CD8-positive, alpha-beta T cell (primary cell): ENCODE measurements at regions of chr11 and their contacts with region 1.

Region 1: DNA sequence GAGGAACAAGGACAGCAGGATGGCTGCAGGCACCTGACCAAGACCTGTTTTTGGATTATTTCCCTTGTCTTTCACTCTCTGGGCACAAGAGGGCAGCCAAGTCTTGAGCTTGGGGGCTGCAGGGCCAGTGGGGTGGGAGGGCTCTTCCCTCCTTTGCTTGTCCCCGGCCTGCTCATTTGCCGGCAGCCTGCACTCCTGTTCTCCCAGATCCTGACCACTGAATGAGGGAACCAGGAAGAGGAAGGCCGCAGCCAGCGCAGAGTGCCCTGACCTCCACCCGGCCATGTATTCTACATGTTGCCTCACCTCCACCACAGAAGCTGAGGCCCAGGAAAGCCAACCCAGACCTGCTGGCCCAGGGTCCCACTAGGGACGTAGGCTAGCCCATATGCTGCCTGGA is 15.5 kb upstream of the NNMT start:
- DNase-seq: no peak
- ATAC-seq: no peak
- H3K4me3 ChIP-seq: no peak overlapping the region
- H3K4me3 Mint-ChIP-seq: no peak overlapping the region
- H3K27ac ChIP-seq: no peak overlapping the region
- H3K27ac Mint-ChIP-seq: no peak overlapping the region
- H3K4me1 ChIP-seq: no peaks in the 10 kb centered on the region
- H3K4me1 Mint-ChIP-seq: no peaks in the 10 kb centered on the region
- H3K27me3 ChIP-seq: no peaks in the 10 kb centered on the region
- H3K27me3 Mint-ChIP-seq: peaks cover 23% of the 10 kb centered on the region
- CTCF ChIP-seq: peak; percentile 22

Region 2: DNA sequence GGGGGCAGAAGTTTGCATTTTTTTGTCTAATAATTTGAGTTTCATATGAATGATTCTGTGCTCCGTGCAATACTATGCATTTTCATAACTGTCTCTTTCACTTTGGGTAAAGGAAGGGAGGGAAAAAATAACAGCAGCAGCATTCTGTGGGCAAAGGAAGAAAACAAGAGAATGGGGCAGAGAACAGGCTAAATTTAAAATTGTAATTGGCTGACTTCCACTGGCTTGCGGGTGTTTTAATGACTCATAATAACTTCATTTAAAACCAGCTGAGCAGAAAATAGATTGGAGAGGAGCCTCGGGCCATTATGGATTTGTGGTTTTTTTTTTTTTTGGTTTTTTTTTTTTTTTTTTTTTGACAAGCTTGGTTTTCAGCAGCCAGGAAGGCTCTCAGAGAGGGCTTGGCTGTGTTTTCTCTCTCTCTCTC is 113.8 kb before region 1 on chr11:
- CTCF ChIA-PET with region 1: no interaction called
- POLR2A ChIA-PET with region 1: no interaction called
- intact Hi-C with region 1: no loop called
- DNase-seq: peak in 2 of 9 experiments; percentile 62 to 74
- ATAC-seq: peak; percentile 45
- H3K4me3 ChIP-seq: no peak overlapping the region
- H3K4me3 Mint-ChIP-seq: peak overlapping the region; percentile 64
- H3K27ac ChIP-seq: no peak overlapping the region
- H3K27ac Mint-ChIP-seq: peak overlapping the region; percentile 77
- H3K4me1 ChIP-seq: peaks cover 84% of the 10 kb centered on the region
- H3K4me1 Mint-ChIP-seq: peaks cover 97% of the 10 kb centered on the region
- H3K27me3 ChIP-seq: no peaks in the 10 kb centered on the region
- H3K27me3 Mint-ChIP-seq: no peaks in the 10 kb centered on the region
- CTCF ChIP-seq: no peak

Region 3: GRCh38 chr11:114269498-114269897 is 11.2 kb before region 1 on chr11:
- CTCF ChIA-PET with region 1: no interaction called
- POLR2A ChIA-PET with region 1: no interaction called
- intact Hi-C with region 1: no loop called
- DNase-seq: no peak
- ATAC-seq: no peak
- H3K4me3 ChIP-seq: no peak overlapping the region
- H3K4me3 Mint-ChIP-seq: no peak overlapping the region
- H3K27ac ChIP-seq: no peak overlapping the region
- H3K27ac Mint-ChIP-seq: no peak overlapping the region
- H3K4me1 ChIP-seq: no peaks in the 10 kb centered on the region
- H3K4me1 Mint-ChIP-seq: no peaks in the 10 kb centered on the region
- H3K27me3 ChIP-seq: no peaks in the 10 kb centered on the region
- H3K27me3 Mint-ChIP-seq: peaks cover 31% of the 10 kb centered on the region
- CTCF ChIP-seq: no peak

Region 4: GRCh38 chr11:114762408-114762807 is 481.7 kb after region 1 on chr11:
- CTCF ChIA-PET with region 1: no interaction called
- POLR2A ChIA-PET with region 1: no interaction called
- intact Hi-C with region 1: loop called in 1 of 2 experiments (anchors 10 kb)
- DNase-seq: peak in 2 of 9 experiments; percentile 14 to 28
- ATAC-seq: no peak
- H3K4me3 ChIP-seq: no peak overlapping the region
- H3K4me3 Mint-ChIP-seq: no peak overlapping the region
- H3K27ac ChIP-seq: no peak overlapping the region
- H3K27ac Mint-ChIP-seq: no peak overlapping the region
- H3K4me1 ChIP-seq: no peaks in the 10 kb centered on the region
- H3K4me1 Mint-ChIP-seq: no peaks in the 10 kb centered on the region
- H3K27me3 ChIP-seq: no peaks in the 10 kb centered on the region
- H3K27me3 Mint-ChIP-seq: peaks cover 20% of the 10 kb centered on the region
- CTCF ChIP-seq: no peak